Breast epithelium (tissue), 4 donors: ENCODE measurements at regions of chr1 and their contacts with region 1.

Region 1: DNA sequence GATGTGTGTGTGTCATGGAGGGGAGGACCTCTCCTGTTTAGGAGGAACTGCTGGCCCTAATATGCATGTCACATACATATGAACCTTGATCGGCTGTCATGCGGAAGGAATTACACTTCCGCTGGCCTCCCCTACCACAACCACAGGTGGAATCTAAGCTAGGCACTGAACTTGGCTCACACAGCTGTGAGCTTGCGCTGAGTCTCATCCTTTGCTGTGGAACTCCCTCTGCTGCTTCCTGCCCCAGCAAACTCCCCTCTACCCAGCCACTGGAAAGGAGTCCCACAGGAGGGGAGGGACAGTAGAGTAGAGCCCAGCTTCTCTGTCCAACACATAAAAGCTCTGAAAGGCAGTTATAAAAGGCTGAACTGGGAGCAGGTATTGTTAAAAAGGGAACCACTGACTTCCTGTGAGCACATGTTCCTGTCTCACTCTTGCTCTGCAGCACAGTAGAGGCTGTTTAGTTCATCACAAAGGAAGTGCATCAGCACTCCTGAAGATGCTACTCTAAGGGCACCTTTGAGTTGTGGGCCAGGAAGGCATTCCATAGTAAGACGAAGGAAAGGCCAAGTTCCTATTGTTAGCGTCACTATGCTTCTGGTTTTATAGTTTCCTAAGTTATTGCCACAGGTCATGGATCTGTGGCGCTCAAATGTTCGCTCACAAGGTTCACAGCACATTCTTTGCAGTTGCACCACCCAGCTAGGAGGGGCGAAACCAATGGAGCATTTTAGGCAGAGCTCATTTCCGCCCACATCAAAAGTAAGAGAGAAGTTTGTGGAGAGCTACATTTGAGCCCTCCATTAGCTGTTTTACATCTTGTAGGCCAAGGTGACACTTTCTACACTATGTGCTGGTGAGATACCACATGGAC is 17.7 kb upstream of the PTPRC start:
- DNase-seq: no peak
- H3K4me3 ChIP-seq: no peak overlapping the region
- H3K27ac ChIP-seq: no peak overlapping the region
- H3K4me1 ChIP-seq: no peaks in the 10 kb centered on the region
- H3K27me3 ChIP-seq: no peaks in the 10 kb centered on the region
- CTCF ChIP-seq: no peak
- POLR2A ChIP-seq: no peak

Region 2: GRCh38 chr1:198443374-198444233 is 177.6 kb before region 1 on chr1:
- intact Hi-C with region 1: loop called (anchors 5 kb)
- DNase-seq: no peak
- H3K4me3 ChIP-seq: no peak overlapping the region
- H3K27ac ChIP-seq: no peak overlapping the region
- H3K4me1 ChIP-seq: no peaks in the 10 kb centered on the region
- H3K27me3 ChIP-seq: no peaks in the 10 kb centered on the region
- CTCF ChIP-seq: no peak
- POLR2A ChIP-seq: no peak

Region 3: DNA sequence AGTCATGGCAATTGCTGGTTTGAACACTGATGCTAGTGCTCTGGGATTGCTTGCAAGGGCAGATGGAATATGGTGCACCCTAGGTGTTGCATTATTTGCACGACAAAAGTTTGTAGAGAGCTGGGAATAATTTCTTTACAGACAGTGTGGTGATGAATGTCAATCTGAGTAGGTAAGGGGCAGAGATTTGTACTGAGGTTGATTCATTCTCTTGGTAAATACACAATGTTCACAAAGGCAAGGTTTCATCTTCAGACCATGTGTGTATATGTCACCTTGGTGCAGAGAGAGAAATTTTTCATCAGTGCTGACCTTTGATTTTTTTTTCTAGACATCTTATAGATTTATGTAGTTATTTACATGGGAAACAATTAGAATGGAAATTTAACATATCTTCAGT is 22.6 kb after region 1 on chr1:
- intact Hi-C with region 1: loop called (anchors 2 kb)
- DNase-seq: no peak
- H3K4me3 ChIP-seq: no peak overlapping the region
- H3K27ac ChIP-seq: no peak overlapping the region
- H3K4me1 ChIP-seq: no peaks in the 10 kb centered on the region
- H3K27me3 ChIP-seq: no peaks in the 10 kb centered on the region
- CTCF ChIP-seq: no peak
- POLR2A ChIP-seq: no peak